ENCODE measurements at regions of chr2 and their contacts with region 1.

Region 1: DNA sequence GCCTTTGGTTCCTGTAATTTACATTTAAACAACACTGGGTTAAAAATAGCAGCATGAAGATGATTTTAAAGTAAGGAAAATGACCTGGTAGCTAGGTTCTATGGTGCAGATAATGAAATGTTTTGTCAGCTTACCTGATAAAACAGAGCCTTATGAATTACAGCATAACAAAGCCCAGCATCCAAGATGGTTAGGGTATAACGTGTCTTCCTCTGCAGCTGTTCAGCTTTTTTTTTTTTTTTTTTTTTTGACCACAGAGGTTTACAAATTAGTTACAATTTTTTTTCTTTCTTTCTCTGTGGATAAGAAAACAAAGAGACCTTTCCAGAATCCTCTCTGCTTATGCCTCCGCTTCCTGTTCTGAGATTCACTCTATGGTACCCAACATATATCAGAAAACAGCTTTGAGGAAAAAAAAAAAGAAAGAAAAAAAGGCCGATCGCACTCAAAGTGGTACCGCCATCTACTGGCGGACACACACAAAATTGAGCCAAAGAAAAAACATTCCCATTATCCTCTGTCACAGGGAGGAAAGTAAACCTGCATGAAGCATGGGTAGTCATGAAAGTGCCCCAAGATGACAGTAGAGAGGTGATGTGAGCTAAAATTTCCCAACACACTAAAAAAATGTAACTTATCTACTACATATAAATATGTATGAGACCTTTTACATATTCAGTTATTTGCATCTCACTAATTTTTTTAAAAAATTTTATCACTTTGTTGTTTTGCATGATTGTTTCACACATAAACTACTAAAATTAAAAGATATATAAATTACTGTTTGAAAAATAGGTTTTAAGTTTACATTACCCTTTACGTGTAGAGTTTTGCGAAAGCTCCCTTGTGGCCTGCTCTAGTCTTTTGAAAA is at the start of gene SCN3A:
- DNase-seq: peak; percentile 30 to 81
- H3K4me3 ChIP-seq: peak within 1 kb of the TSS in 1 of 4 donors; percentile 16
- H3K27ac ChIP-seq: no peak within 1 kb of the TSS
- H3K4me1 ChIP-seq: peaks cover 0 to 4% (median 0%) of the 10 kb centered on the region in 4 donors
- H3K27me3 ChIP-seq: no peaks in the 10 kb centered on the region
- CTCF ChIP-seq: peak in 5 of 7 experiments; percentile 28 to 55 (median 48)
- EP300 ChIP-seq: no peak
- POLR2A ChIP-seq: no peak
- total RNA-seq, gene SCN3A: 0.87 to 12.5 (median 3.2) TPM in 4 of 5 donors, not detected in the other

Region 2: DNA sequence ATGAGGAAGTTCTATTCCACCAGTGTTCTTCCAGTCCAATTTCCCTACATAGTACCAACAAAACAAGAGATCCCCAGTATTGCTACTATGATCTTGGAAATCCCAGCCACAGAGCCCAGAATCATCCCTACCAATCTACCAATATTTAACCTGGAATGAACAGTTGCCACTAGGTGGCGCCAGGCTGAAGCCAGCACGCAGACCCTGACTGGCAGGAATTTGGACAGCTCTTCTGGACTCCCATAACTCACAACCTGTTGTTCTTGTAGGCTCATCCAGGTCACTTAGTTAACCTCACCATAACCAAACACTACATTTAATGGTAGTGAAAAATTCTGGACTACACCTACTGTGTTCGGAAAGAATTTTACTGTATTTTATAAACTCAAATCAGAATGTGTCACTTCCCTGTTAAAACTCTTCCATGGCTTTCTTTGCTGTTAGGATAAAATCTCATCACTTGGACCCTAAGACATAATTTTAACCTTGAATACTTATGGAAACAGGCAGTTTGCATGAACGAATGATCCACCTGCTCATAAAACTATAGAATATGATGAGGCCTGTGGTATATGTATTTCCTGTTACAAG is 188.8 kb before region 1 on chr2:
- intact Hi-C with region 1: loop called (anchors 10 kb)
- DNase-seq: peak; percentile 74 to 86
- H3K4me3 ChIP-seq: no peak overlapping the region
- H3K27ac ChIP-seq: no peak overlapping the region
- H3K4me1 ChIP-seq: peaks cover 0 to 7% (median 0%) of the 10 kb centered on the region in 4 donors
- H3K27me3 ChIP-seq: no peaks in the 10 kb centered on the region
- CTCF ChIP-seq: peak in 5 of 7 experiments; percentile 22 to 80 (median 58)
- EP300 ChIP-seq: no peak
- POLR2A ChIP-seq: no peak

Measured in stomach (tissue), 19 donors.